Panc1 (cell line): ENCODE measurements at regions of chr2 and their contacts with region 1.

Region 1: DNA sequence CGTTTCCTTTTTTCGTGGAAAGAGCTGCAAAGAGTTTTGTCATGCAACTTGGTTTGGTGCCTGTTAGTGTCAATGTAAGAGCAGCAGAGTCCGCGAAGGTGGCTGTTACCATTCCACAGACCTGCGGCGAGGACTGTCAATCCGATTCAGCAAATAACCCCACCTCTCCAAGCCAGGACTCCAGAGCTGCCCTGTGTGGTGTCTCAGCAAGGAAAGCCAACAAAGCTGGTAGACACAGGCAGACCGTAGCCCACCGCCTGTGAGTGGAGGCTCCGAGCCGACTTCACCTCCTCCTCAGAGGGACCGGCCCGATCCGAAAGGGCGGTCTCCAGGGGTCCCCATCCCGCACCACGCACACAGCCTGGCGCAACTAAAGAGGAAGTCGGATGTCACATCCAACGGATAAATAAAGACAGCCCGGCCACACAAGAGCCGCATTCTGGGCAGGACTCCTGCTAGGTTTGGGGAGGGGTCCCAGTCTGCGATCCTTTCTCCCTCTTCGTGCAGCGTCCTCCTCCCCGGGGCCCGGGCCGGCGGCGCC is 819 bp downstream of the ANKRD44 start:
- DNase-seq: no peak
- ATAC-seq: peak; percentile 36; the same call in 1 of the 2 replicates
- H3K4me3 ChIP-seq: peak overlapping the region; percentile 66 to 79
- H3K27ac ChIP-seq: peak overlapping the region; percentile 69
- H3K4me1 ChIP-seq: peaks cover 17% of the 10 kb centered on the region
- H3K27me3 ChIP-seq: no peaks in the 10 kb centered on the region
- CTCF ChIP-seq: no peak

Region 2: DNA sequence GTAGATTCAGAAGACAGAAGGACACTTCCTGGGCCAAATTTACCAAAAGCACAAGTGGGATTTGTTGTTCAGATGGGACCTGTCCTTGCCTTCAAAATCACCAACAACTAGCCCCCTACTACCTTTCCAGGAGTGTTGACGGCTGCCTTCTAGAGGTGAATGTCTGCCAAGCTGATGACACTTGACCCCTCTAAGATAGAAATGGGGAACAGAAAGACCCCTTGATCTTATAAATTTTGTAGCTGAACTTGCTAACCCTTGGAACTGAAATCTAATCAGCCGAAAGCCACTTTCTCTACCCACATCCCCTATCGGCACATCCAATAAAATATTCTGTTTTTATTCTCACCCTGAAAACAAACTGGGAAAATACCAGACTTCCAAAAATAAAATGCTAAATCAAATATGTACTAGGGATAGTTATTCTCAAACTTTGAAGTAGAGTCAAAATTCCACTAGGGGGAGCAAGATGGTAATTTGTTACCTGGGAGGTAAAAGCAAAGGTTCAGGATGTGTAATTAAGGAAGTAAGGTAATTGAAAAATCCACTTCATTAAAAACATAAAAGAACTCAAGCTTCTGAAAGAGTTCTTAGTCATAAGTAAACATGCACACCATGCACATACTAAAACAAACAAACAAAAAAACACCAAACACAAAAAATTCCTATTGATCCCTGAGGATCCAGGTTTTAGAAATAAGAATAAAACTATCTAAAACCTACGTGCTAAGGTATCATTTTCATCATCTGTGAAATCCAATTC is 118.4 kb before region 1 on chr2:
- CTCF ChIA-PET with region 1: no interaction called
- POLR2A ChIA-PET with region 1: no interaction called
- in situ Hi-C with region 1: no loop called
- intact Hi-C with region 1: loop called (anchors 2 kb)
- DNase-seq: no peak
- ATAC-seq: peak; percentile 75; the same call in 1 of the 2 replicates
- H3K4me3 ChIP-seq: no peak overlapping the region
- H3K27ac ChIP-seq: no peak overlapping the region
- H3K4me1 ChIP-seq: no peaks in the 10 kb centered on the region
- H3K27me3 ChIP-seq: no peaks in the 10 kb centered on the region
- CTCF ChIP-seq: peak; percentile 73

Region 3: GRCh38 chr2:198004921-198005829 is 695.4 kb after region 1 on chr2:
- CTCF ChIA-PET with region 1: no interaction called
- POLR2A ChIA-PET with region 1: no interaction called
- in situ Hi-C with region 1: no loop called
- intact Hi-C with region 1: no loop called
- DNase-seq: no peak
- ATAC-seq: no peak
- H3K4me3 ChIP-seq: no peak overlapping the region
- H3K27ac ChIP-seq: no peak overlapping the region
- H3K4me1 ChIP-seq: no peaks in the 10 kb centered on the region
- H3K27me3 ChIP-seq: no peaks in the 10 kb centered on the region
- CTCF ChIP-seq: no peak